Activated B cell treated with CpG ODN at 0.5 μM for 24 hours (primary cell): ENCODE measurements at regions of chr18 and their contacts with region 1.

Region 1: DNA sequence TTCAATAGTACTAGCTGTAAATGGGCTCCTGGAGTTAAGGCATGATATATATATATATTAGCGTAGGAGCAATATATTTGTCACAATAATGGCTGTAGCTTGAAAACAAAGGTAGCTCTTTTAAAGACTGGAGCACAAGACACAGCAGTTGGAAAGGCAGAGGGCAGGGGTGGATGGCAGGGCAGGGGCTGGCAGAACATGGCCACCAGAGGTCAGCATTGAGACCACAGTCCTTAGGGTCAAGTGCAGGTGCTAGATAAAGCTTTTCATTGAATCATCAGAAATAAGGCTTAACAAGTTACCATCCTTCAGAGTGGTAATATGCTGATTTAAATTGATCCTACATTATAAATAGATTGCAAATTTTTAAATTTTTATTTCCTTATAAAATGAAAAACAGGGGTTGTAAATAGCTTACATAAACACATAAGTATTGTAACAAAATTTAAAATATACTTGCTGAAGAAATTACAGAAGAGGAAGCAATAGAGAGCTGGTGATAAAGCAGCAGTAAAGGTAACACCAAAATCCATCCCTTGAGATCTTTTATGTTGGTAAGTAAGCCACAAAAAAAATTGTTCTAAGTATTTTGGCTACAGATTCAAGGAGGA is 161.2 kb upstream of the PIEZO2 start:
- DNase-seq: no peak
- ATAC-seq: no peak
- H3K4me3 Mint-ChIP-seq: no peak overlapping the region
- H3K27ac Mint-ChIP-seq: no peak overlapping the region
- H3K4me1 Mint-ChIP-seq: no peaks in the 10 kb centered on the region
- H3K27me3 Mint-ChIP-seq: no peaks in the 10 kb centered on the region
- CTCF ChIP-seq: no peak

Region 2: GRCh38 chr18:11366410-11366809 is 55.8 kb after region 1 on chr18:
- CTCF ChIA-PET with region 1: no interaction called
- POLR2A ChIA-PET with region 1: no interaction called
- intact Hi-C with region 1: no loop called
- DNase-seq: no peak
- ATAC-seq: no peak
- H3K4me3 Mint-ChIP-seq: no peak overlapping the region
- H3K27ac Mint-ChIP-seq: no peak overlapping the region
- H3K4me1 Mint-ChIP-seq: no peaks in the 10 kb centered on the region
- H3K27me3 Mint-ChIP-seq: no peaks in the 10 kb centered on the region
- CTCF ChIP-seq: no peak

Region 3: DNA sequence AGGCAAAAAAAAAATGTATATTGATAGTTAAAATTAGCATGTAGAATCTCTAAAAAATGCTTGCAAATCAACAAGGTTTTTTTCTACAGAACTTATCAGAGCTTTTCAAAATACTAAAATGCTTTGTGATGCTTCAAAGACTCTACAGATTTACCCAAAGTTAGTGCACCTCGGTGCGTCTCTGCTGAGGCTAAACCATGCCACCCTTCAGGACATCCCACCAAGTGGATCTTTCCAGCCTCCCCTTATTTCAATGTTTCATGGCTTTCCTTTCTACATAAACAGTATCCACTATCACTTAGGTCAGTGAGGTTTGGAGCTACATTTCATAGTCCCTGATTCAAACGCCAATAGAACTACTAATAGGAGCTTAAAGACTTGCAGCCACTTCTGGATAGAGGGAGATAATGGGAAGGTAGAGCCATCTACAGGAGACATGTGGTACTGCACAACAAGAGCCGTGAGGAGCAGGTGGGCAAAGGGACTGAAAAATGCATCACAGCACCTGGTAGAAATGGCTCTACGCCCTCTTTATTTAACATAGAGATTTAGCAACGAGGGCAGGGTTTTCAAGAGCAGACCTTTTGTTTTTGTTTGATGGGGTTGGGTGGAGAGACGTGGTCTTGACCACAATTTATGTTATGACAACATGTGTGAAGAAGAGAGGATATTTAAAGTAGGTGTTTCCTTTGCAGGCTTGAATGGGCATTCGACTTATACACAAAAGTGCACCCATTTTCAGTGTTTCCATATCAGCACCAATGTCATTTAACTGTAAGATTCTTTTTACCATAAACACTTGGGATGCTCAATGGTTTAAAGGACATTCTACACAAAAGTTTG is 242.7 kb after region 1 on chr18:
- CTCF ChIA-PET with region 1: interaction called, 7 read pairs
- POLR2A ChIA-PET with region 1: no interaction called
- intact Hi-C with region 1: loop called (anchors 2 kb)
- DNase-seq: no peak
- ATAC-seq: peak; percentile 54
- H3K4me3 Mint-ChIP-seq: no peak overlapping the region
- H3K27ac Mint-ChIP-seq: no peak overlapping the region
- H3K4me1 Mint-ChIP-seq: peaks cover 6% of the 10 kb centered on the region
- H3K27me3 Mint-ChIP-seq: peaks cover 4% of the 10 kb centered on the region
- CTCF ChIP-seq: peak; percentile 61